ENCODE measurements at regions of chr13 and their contacts with region 1.

Region 1: DNA sequence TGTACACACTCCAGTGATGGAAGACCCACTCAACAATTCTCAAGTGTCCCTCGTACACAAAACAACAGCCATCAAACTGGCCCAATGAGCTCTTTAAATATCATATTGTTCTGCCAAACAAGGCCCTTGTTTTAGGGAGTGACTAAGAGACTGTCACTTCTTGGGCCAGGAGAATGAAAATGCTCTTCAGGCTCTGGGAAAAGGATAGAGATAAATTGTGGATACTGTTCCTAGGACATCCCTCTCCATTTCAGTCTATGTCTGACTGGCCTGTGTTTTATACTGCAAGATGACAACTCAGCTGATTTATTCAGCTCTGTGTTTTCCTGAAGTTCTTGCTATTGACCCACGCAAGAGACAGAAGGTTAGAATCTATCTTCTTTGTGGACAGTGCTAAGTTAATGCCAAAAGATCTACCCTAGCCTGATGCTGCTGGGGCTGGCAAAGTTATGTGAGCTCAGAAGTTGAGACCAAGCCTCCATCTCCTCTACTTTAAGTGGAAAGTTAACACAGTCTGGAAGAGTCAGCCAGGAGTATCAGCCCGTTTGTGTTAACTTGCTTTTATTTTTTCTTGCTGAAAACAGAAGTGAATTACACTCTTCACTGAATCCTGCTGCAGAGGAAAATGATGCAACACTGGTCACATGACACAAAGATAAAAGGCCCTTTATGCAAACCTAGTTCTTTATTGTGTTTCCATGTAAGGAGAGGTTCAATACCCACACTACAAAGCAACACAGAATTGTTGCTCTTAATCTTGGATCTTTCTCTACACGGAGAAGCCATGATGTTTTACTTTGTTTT is 14.6 kb downstream of the FRY start:
- DNase-seq: peak; percentile 62 to 85 (median 77)
- H3K4me3 ChIP-seq: peak overlapping the region in 4 of 7 experiments; percentile 15 to 50 (median 28)
- H3K27ac ChIP-seq: peak overlapping the region; percentile 46 to 84
- H3K4me1 ChIP-seq: peaks cover 21 to 56% (median 39%) of the 10 kb centered on the region in 4 experiments
- H3K27me3 ChIP-seq: no peaks in the 10 kb centered on the region

Region 2: DNA sequence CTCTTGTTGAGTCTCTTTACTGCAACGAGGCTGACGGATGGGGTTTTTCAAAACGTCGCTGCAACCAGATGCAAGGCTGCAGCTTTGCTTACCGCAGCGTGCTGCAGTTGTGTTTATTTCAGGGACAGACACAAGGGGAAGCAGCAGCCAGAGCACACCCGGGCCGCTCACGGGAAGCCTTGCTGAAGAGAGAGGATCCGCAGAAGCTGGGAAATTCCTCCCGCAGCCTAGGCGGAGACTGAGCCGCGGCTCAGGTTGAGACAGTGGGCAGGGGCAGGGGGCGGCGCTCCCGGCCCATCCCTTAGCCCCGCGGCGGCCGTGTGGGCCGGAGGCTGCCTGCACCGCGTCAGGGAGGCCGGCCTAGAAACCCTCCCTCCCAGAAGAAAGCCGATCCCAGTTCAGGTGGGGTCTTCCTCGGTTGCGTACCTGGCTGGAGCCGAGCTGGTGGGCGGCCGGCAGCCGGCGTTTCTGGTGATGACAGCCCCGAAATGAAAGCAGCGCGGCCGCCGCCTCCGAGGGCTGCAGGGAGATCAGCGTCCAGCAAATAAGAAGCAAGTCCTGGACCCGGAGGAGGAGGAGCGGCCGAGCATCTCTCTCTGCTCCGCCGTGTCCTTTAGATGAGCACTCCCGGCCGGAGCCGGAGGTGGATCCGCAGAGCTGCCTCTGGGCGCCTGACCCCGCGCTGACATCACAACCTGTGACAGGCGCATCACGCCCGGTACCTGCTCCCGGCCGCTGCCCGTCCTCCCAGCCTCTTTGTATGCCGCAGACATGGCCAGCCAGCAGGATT is 15.0 kb before region 1 on chr13 and contains the start of gene FRY:
- CTCF ChIA-PET with region 1: interaction called, 18 read pairs
- POLR2A ChIA-PET with region 1: interaction called, 4 read pairs
- DNase-seq: peak; percentile 75 to 92 (median 88)
- H3K4me3 ChIP-seq: peak within 1 kb of the TSS; percentile 84 to 98 (median 96)
- H3K27ac ChIP-seq: peak within 1 kb of the TSS; percentile 59 to 83
- H3K4me1 ChIP-seq: peaks cover 34 to 50% (median 38%) of the 10 kb centered on the region in 4 experiments
- H3K27me3 ChIP-seq: no peaks in the 10 kb centered on the region

Region 3: GRCh38 chr13:32107474-32107873 is 61.3 kb after region 1 on chr13:
- CTCF ChIA-PET with region 1: interaction called, 10 read pairs
- POLR2A ChIA-PET with region 1: no interaction called
- DNase-seq: peak; percentile 62 to 90 (median 85)
- H3K4me3 ChIP-seq: peak overlapping the region in 2 of 7 experiments; percentile 1 to 38
- H3K27ac ChIP-seq: peak overlapping the region; percentile 67 to 88
- H3K4me1 ChIP-seq: peaks cover 13 to 42% (median 26%) of the 10 kb centered on the region in 4 experiments
- H3K27me3 ChIP-seq: no peaks in the 10 kb centered on the region